Left ventricle myocardium superior (tissue), 1 donor: ENCODE measurements at regions of chr20 and their contacts with region 1.

Region 1: GRCh38 chr20:16729565-16730456 is at the start of gene SNRPB2:
- DNase-seq: peak; percentile 94
- ATAC-seq: peak; percentile 100
- total RNA-seq, gene SNRPB2: 34.2 TPM

Region 2: GRCh38 chr20:16573001-16573965 is 156.5 kb before region 1 on chr20 and contains the start of gene KIF16B:
- intact Hi-C with region 1: loop called (anchors 10 kb)
- DNase-seq: peak; percentile 96
- ATAC-seq: peak; percentile 97
- total RNA-seq, gene KIF16B: 17.8 TPM